Calu3 (cell line): ENCODE measurements at regions of chr2 and their contacts with region 1.

Region 1: DNA sequence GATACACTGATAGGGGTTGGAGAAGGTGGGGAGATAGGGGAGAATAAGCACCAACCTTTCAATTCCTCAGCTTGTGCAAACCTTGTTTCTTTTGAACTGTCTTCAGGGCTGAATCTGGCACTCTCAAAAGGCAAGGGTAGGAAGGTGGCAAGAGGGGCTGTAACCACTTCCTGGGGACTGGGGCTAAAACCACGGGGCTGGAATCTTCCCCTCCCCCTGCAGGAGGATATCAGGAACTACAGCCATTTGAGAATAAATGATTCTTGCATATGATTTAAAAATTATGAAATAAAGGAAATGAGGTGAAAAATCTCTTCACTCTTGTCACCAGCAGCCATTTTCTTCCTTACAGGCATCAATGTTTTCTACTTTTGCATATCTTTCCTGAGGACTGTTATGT is 50.8 kb downstream of the ATOH8 start:
- DNase-seq: no peak
- H3K4me3 Mint-ChIP-seq: no peak overlapping the region
- H3K27ac Mint-ChIP-seq: no peak overlapping the region
- H3K4me1 Mint-ChIP-seq: peaks cover 25% of the 10 kb centered on the region
- H3K27me3 Mint-ChIP-seq: no peaks in the 10 kb centered on the region
- CTCF ChIP-seq: peak; percentile 42

Region 2: GRCh38 chr2:85741833-85742455 is 62.6 kb before region 1 on chr2:
- CTCF ChIA-PET with region 1: interaction called, 15 read pairs
- intact Hi-C with region 1: no loop called
- DNase-seq: peak; percentile 67
- H3K4me3 Mint-ChIP-seq: peak overlapping the region; percentile 53
- H3K27ac Mint-ChIP-seq: peak overlapping the region; percentile 84
- H3K4me1 Mint-ChIP-seq: peaks cover 38% of the 10 kb centered on the region
- H3K27me3 Mint-ChIP-seq: no peaks in the 10 kb centered on the region
- CTCF ChIP-seq: no peak

Region 3: DNA sequence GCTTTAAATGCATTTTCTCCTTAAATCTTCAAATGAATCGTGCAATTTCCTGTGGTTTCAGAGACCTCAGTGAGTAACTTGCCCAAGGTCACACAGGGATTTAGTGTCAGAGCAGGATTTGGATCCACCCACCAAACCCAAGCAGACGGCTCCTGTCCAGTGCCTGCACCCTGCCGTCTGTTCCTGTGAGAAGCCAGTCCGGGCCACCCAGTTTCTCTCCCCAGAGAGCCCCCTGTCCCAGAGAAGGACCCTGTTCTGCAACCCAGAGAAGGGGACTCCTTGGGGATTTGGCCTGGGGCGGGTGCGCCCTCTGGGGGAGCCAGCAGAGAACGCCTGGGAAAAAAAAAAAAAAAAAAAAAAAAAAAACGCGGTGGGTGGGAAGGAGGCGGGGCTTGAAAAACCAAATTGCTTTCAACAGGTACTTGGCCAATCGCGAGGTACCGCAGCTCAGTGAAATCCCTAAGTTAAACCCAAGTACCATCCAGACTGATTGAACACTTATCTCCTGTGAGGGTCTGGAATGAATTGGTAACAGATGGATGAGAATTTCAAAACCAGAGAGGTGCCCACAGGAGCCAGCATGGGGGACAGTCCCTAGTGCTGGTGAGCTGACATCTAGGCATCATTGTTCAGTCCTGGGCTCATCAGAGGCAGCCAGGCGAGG is 563.7 kb after region 1 on chr2:
- CTCF ChIA-PET with region 1: no interaction called
- intact Hi-C with region 1: no loop called
- DNase-seq: peak; percentile 49
- H3K4me3 Mint-ChIP-seq: peak overlapping the region; percentile 21
- H3K27ac Mint-ChIP-seq: no peak overlapping the region
- H3K4me1 Mint-ChIP-seq: peaks cover 13% of the 10 kb centered on the region
- H3K27me3 Mint-ChIP-seq: peaks cover 3% of the 10 kb centered on the region
- CTCF ChIP-seq: peak; percentile 69